ENCODE measurements at regions of chr10 and their contacts with region 1.

Region 1: GRCh38 chr10:128150045-128150493 is 23.8 kb upstream of the MKI67 start:
- DNase-seq: peak; percentile 99
- H3K4me3 ChIP-seq: peak overlapping the region; percentile 58 to 81
- H3K27ac ChIP-seq: peak overlapping the region in 1 of 2 experiments; percentile 39; a peak in 1 of 4 replicates
- H3K4me1 ChIP-seq: peaks cover 6 to 14% of the 10 kb centered on the region in 2 experiments; a peak in 2 of 4 replicates
- H3K27me3 ChIP-seq: no peaks in the 10 kb centered on the region
- CTCF ChIP-seq: peak; percentile 77
- EP300 ChIP-seq: no peak
- RAD21 ChIP-seq: peak; percentile 83

Region 2: DNA sequence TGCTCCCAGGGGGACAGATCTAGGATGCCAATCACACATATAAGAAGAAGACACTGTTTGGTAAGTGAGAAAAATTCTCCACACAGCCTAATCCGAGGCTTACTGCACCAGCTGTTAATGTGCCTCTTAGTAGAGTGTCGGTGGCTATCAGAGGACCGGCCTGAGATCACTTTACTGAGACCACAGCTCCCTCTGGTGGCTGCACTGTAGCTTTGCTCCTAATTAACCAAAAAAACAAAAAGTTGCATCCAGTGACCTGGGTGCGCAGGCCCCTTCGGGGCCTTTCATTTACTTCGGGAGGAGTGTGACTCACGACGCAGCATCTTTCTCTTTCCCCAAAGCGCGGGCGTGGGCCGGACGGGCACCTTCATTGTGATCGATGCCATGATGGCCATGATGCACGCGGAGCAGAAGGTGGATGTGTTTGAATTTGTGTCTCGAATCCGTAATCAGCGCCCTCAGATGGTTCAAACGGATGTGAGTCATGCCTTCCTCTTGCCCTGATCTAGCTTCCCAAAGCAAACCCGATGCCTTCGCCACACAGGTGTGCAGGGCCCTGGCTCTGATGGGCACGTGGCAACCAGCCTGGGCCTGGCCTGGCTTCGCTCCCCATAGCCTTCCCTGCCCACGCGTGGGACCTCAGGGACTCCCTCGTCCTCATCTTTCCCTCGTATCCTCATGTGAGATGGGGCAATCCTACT is 80.6 kb before region 1 on chr10:
- CTCF ChIA-PET with region 1: interaction called, 23 read pairs
- POLR2A ChIA-PET with region 1: no interaction called
- DNase-seq: peak; percentile 85
- H3K4me3 ChIP-seq: peak overlapping the region in 1 of 2 experiments; percentile 11; a peak in 1 of 4 replicates
- H3K27ac ChIP-seq: no peak overlapping the region
- H3K4me1 ChIP-seq: no peaks in the 10 kb centered on the region
- H3K27me3 ChIP-seq: no peaks in the 10 kb centered on the region
- CTCF ChIP-seq: peak; percentile 83
- EP300 ChIP-seq: no peak
- RAD21 ChIP-seq: peak; percentile 95

Region 3: DNA sequence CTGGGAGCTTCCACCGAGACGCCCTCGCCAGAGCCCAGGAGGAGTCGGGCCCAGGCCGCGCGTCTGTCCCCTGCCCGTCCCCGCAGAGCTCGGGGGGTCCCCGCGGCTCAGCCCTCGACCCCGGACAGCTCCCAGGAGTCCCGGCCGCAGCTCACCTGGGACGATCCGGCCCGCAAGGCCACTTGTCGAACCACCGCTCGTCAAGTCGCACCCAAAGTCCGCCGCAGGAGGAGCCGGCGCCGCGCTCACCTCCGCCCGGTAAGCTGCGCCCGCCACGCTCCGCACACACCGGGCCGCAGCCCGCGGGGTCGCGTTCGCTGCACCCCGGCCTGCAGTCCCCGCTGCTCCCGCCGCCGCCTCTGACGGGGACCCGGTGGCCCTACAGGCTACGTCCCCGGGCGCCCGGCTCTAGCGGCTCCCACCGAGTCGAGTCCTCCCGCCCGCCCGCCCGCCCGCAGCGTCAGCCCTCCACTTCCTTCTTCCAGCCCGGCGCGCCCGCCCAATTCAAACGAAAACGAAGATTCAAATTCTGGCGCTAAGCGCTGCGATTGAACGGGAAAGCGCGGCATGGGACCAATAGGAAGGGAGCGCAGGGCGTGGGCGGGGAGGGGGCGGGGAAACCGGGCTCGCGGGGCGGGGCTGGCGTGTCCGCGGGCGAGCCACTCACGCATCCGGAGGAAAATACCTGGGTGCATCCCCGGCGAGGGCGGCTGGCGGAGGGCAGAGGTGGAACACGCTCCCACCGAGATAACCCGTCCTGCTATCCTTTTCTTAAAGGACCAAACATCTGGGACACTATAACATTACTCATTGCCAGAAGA is 23.9 kb before region 1 on chr10 and contains the start of gene MKI67:
- CTCF ChIA-PET with region 1: interaction called, 20 read pairs
- POLR2A ChIA-PET with region 1: no interaction called
- DNase-seq: peak; percentile 97
- H3K4me3 ChIP-seq: peak within 1 kb of the TSS; percentile 77 to 92
- H3K27ac ChIP-seq: peak within 1 kb of the TSS; percentile 0 to 43; a peak in 2 of 4 replicates
- H3K4me1 ChIP-seq: peaks cover 0 to 14% of the 10 kb centered on the region in 2 experiments; a peak in 3 of 4 replicates
- H3K27me3 ChIP-seq: no peaks in the 10 kb centered on the region
- CTCF ChIP-seq: no peak
- EP300 ChIP-seq: no peak
- RAD21 ChIP-seq: no peak
- polyA plus RNA-seq, gene MKI67: 5.7 and 7.5 TPM in 2 replicates

Region 4: GRCh38 chr10:128161031-128161430 is 11.0 kb after region 1 on chr10:
- CTCF ChIA-PET with region 1: interaction called, 21 read pairs
- POLR2A ChIA-PET with region 1: no interaction called
- DNase-seq: no peak
- H3K4me3 ChIP-seq: no peak overlapping the region
- H3K27ac ChIP-seq: no peak overlapping the region
- H3K4me1 ChIP-seq: no peaks in the 10 kb centered on the region; a peak in 1 of 4 replicates
- H3K27me3 ChIP-seq: no peaks in the 10 kb centered on the region
- CTCF ChIP-seq: no peak
- EP300 ChIP-seq: no peak
- RAD21 ChIP-seq: no peak

Region 5: DNA sequence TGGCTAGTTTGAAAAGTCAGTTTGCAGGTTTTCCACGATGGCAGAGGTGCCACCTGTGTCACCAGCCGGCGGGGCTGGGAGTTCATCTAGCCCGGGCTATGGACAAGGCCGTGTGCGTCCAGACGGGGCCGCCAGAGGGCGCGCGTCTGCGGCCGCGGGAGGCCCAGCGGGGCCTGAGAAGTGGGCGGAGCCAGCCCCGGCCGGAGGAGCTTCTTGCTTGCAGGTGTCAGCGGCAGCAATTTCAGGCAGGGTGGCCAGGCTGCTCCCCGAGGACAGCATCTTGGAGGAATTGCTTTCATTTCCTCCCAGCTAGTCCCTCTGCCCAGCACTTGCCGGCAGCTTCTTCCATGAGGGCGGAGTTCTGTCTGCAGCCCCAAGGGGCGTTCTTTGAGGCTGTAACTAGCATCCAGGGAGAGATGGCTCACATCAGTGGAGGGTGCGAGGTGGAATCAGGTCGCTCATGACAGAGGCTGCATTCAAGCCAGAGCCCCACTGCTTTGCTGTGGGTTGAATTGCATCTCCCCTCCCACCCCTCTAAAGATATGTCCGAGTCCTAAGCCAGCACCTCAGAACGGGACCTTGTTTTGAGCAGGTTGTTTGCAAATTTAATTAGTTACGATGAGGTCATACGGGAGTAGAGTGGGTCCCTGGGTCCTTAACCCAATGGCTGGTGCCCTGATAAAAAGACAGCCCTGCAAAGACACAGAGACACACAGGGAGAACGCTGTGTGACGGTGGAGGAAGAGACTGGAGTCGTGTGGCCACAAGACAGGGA is 62.1 kb after region 1 on chr10:
- CTCF ChIA-PET with region 1: interaction called, 18 read pairs
- POLR2A ChIA-PET with region 1: interaction called, 5 read pairs
- DNase-seq: peak; percentile 97
- H3K4me3 ChIP-seq: peak overlapping the region; percentile 42 to 57; a peak in 3 of 4 replicates
- H3K27ac ChIP-seq: no peak overlapping the region
- H3K4me1 ChIP-seq: peaks cover 0 to 9% of the 10 kb centered on the region in 2 experiments; a peak in 1 of 4 replicates
- H3K27me3 ChIP-seq: no peaks in the 10 kb centered on the region
- CTCF ChIP-seq: peak; percentile 78
- EP300 ChIP-seq: no peak
- RAD21 ChIP-seq: peak; percentile 61

Region 6: DNA sequence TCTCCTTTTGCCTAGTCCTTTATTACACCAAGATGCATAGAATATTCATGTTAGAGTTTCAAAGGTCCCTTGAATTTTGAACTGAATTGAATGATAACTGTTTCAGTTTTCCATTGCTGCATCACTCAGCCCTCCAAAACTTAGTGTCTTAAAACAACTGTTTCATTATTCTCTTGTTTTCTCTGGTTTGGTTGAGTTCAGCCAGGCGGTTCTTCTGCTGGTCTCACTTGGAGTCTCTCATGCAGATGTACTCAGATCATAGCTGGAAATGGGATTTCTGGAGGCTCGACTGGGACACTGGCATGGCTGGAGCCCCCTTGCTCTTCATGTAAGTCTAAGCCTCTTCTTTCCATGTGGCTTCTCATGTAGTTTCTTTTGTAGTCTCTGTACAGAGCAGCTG is 83.4 kb after region 1 on chr10:
- CTCF ChIA-PET with region 1: no interaction called
- POLR2A ChIA-PET with region 1: no interaction called
- DNase-seq: no peak
- H3K4me3 ChIP-seq: no peak overlapping the region
- H3K27ac ChIP-seq: no peak overlapping the region
- H3K4me1 ChIP-seq: no peaks in the 10 kb centered on the region; a peak in 1 of 4 replicates
- H3K27me3 ChIP-seq: no peaks in the 10 kb centered on the region
- CTCF ChIP-seq: no peak
- EP300 ChIP-seq: no peak
- RAD21 ChIP-seq: no peak

Region 7: DNA sequence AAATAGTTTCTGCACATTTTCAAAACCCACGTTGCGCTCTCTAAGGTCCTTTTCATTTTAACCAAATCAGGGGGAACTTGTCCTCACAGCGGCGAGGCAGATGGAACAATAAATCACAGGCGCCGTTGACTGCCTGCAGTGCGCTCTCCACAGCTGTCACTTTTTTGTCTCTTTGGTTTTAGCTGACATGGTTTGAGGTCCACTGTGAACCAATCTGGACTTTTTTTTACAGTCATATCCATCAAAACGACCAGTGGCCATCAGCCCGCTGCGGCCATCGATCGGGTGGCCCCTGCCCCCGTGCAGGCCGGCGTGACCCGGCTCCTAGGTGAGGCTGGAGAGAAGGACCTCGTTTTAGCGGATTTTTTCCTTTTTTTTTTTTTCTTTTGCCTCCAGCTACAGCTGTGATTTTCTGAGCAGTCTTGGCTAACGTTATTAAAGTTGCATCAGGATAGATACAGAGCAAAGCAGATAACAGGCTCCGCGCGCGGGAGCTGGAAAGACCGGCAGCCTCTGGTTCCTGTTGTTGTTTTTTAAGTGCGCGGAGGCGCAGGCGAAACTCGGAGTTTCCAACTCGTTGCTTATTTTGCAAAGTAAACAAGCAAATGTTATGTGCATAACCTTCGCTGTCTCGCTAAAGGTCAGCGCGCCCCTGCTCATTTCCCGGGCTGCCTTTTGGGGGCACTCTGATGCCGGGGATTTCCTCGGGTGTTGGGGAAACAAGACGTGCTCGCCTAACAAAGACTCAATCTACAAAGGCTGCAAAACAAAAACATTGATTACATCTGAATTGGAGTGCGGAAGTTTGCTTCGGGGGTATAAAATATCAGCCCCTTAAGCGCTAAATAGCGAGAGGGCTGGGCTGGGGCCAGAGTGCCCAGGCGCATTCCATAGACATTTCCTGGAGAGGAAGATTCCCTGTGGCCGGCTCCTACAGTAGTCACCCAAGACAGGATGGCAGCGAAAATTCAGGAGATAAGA is 391.0 kb after region 1 on chr10:
- CTCF ChIA-PET with region 1: no interaction called
- POLR2A ChIA-PET with region 1: no interaction called
- DNase-seq: peak; percentile 77
- H3K4me3 ChIP-seq: peak overlapping the region in 1 of 2 experiments; percentile 33; a peak in 1 of 4 replicates
- H3K27ac ChIP-seq: peak overlapping the region in 1 of 2 experiments; percentile 22; a peak in 1 of 4 replicates
- H3K4me1 ChIP-seq: peaks cover 0 to 9% of the 10 kb centered on the region in 2 experiments; a peak in 1 of 4 replicates
- H3K27me3 ChIP-seq: no peaks in the 10 kb centered on the region
- CTCF ChIP-seq: no peak
- EP300 ChIP-seq: peak in 1 of 2 experiments; percentile 46; a peak in 2 of 4 replicates
- RAD21 ChIP-seq: peak; percentile 66

Measured in SK-N-SH (cell line).